OCI-LY7 (cell line): ENCODE measurements at regions of chr20 and their contacts with region 1.

Region 1: DNA sequence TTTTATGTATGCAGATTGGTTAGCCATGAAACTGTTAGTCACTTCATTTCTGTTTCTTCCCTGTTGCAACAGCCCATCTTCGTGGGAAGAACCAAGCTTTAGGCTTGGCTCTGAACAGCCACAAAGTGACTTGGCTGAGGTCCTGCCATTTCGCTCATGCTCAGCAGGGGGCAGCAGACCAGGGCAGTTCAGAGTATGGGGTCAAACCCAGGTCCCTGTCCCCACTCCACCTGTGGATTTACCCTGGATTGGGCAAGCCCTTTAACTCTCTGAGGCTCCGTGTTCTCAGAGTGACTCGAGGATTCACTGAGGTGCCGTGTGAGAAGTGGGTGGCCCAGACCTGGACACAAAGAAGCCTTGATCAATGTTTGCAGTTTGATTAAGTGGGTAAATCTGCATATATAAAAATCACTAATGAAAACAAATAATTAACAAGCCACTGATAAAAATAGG is 19.8 kb upstream of the MAP1LC3A start:
- DNase-seq: peak; percentile 64
- H3K4me3 ChIP-seq: no peak overlapping the region
- H3K27ac ChIP-seq: no peak overlapping the region
- H3K4me1 ChIP-seq: no peaks in the 10 kb centered on the region
- CTCF ChIP-seq: peak; percentile 94

Region 2: DNA sequence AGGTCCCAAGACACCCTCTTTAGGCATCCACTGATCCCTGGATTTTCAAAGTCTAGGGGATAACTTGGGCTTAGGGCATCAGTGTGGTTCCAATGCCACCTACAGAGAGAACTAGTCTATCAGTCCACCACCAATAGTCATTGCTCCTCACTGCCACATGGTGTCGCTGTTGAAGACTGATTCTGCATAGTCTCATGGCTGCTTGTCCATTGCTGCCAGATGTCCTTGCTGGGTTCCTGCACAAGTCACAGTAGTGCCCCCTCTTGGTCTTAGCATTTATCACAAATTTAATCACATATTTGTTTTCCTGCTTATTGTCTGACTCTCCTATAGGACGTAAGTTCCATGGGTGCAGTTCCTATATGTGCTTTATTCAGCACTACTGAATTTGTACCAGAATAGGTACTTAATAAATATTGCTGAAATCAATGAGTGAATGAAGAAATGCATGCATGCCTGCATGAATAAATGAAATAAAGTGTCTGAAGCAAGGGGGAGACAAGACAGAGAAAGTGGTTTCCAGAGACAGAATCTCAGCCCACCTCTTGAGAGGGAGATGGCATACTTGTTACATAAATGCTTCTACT is 590.9 kb before region 1 on chr20:
- CTCF ChIA-PET with region 1: no interaction called
- POLR2A ChIA-PET with region 1: no interaction called
- intact Hi-C with region 1: no loop called
- DNase-seq: peak; percentile 87
- H3K4me3 ChIP-seq: no peak overlapping the region
- H3K27ac ChIP-seq: no peak overlapping the region
- H3K4me1 ChIP-seq: no peaks in the 10 kb centered on the region
- CTCF ChIP-seq: peak; percentile 100

Region 3: GRCh38 chr20:34768096-34768495 is 229.4 kb after region 1 on chr20:
- CTCF ChIA-PET with region 1: no interaction called
- POLR2A ChIA-PET with region 1: no interaction called
- intact Hi-C with region 1: loop called (anchors 5 kb)
- DNase-seq: no peak
- H3K4me3 ChIP-seq: no peak overlapping the region
- H3K27ac ChIP-seq: no peak overlapping the region
- H3K4me1 ChIP-seq: no peaks in the 10 kb centered on the region
- CTCF ChIP-seq: no peak